ENCODE measurements at regions of chr9 and their contacts with region 1.

Region 1: GRCh38 chr9:73104342-73104741 is 47.3 kb upstream of the ANXA1 start:
- DNase-seq: no peak
- ATAC-seq: no peak
- H3K4me3 ChIP-seq: no peak overlapping the region
- H3K27ac ChIP-seq: no peak overlapping the region
- H3K4me1 ChIP-seq: no peaks in the 10 kb centered on the region
- H3K27me3 ChIP-seq: no peaks in the 10 kb centered on the region
- CTCF ChIP-seq: no peak
- POLR2A ChIP-seq: no peak

Region 2: DNA sequence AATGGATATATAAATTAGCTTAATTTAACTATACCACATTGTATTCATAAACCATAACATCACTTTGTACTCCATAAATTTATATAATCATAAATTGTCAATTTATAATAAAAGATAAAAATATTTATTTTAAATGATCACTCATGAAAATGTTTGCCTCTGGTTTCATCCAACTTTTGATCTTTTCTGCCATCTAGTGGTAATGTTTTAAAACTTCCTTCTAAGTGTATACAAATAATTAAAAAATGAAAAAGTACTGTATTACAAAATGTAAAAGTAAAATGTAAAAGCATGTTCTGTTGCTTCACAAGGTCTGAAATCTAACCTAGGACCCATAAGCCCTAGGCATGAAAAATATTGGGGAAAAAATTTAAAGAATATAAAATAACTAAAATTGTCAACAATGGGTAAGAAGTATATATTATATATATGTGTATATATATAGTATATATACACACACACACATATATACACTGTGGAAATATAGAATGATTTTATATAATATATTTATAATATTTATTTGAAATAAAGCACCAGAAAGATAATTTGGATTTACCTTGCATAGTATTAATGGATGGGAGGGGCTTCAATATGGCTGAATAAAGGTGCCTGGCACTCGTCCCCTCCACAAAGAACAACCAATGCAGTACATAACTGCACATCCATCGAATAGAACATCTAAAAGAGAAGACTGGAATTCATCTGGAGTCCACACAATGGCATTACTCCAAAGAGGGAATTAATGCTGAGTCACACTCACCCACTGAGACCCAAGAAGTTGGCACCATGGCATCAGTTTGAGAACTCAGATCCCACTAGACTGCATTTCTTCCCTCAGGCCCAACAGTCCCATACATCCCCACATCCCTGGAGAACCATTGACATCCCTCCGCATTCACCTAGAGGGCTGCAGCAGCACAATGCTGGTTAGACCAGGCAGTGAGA is 79.8 kb after region 1 on chr9:
- intact Hi-C with region 1: loop called (anchors 10 kb)
- DNase-seq: no peak
- ATAC-seq: no peak
- H3K4me3 ChIP-seq: no peak overlapping the region
- H3K27ac ChIP-seq: no peak overlapping the region
- H3K4me1 ChIP-seq: no peaks in the 10 kb centered on the region
- H3K27me3 ChIP-seq: no peaks in the 10 kb centered on the region
- CTCF ChIP-seq: peak; percentile 11 to 66 (median 51)
- POLR2A ChIP-seq: no peak